ENCODE measurements at regions of chr1 and their contacts with region 1.

Region 1: GRCh38 chr1:58515794-58516401 is 30.6 kb downstream of the OMA1 start:
- H3K4me3 ChIP-seq: no peak overlapping the region
- H3K27ac ChIP-seq: no peak overlapping the region
- H3K4me1 ChIP-seq: no peaks in the 10 kb centered on the region
- CTCF ChIP-seq: peak; percentile 44; the same call in 1 of the 2 replicates

Region 2: DNA sequence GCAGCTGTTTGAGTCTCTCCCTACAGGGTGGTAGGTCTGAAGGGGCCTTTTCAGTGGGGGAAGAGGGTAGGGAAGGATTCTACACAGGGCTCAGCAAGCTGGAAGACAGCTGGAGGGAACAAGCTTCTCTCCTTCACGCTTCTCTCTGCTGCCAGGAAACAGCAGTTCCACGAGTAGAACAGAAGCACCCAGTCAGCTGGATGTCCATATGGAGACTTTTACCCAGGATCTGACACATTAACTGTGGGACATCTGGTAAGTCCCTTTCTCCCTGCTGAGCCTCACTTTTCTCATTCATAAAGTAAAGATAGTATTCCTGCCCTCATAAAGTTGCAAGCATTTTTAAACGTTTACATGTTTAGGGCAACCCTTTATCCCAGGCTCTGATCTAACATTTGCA is 249.7 kb before region 1 on chr1:
- CTCF ChIA-PET with region 1: no interaction called
- POLR2A ChIA-PET with region 1: no interaction called
- H3K4me3 ChIP-seq: no peak overlapping the region
- H3K27ac ChIP-seq: no peak overlapping the region
- H3K4me1 ChIP-seq: no peaks in the 10 kb centered on the region
- CTCF ChIP-seq: no peak

Region 3: DNA sequence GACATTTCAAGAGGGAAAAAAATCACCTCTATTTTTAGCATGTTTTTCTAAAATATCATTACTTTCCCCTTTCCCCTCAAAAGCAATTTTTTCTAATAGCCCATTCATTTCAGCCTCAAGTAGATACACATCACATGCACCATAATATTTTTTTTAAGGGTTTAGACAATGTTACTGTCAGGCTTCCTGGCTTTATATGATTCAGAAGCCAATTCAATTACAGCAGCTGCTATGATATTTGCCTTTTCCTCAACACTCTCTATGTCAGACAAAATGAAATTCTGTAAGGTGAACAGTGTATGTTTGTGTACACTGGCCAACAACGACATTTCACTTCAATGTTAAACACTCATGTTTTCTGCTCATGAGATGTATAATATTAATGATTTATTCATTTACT is 15.9 kb before region 1 on chr1:
- CTCF ChIA-PET with region 1: interaction called, 13 read pairs
- POLR2A ChIA-PET with region 1: no interaction called
- H3K4me3 ChIP-seq: no peak overlapping the region
- H3K27ac ChIP-seq: no peak overlapping the region
- H3K4me1 ChIP-seq: no peaks in the 10 kb centered on the region
- CTCF ChIP-seq: no peak

Region 4: DNA sequence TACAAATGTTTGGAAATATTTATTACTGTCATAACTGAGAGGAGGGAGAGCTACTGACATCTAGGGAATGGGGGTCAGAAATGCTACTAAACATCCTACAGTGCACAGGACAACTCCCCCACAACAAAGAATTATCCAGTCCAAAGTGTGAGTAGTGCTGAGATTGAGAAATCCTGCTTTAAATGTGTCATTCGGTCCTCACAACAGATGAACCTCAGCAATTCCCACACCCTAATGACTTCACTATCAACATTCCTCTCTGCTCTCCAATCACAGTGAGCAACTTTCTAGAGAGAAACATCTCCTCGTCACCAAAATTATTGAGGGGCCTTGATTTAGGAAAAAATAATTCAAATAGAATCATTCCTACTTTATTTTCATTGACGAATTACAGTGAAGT is 12.6 kb after region 1 on chr1:
- CTCF ChIA-PET with region 1: interaction called, 30 read pairs
- POLR2A ChIA-PET with region 1: no interaction called
- H3K4me3 ChIP-seq: no peak overlapping the region
- H3K27ac ChIP-seq: no peak overlapping the region
- H3K4me1 ChIP-seq: no peaks in the 10 kb centered on the region
- CTCF ChIP-seq: no peak

Region 5: DNA sequence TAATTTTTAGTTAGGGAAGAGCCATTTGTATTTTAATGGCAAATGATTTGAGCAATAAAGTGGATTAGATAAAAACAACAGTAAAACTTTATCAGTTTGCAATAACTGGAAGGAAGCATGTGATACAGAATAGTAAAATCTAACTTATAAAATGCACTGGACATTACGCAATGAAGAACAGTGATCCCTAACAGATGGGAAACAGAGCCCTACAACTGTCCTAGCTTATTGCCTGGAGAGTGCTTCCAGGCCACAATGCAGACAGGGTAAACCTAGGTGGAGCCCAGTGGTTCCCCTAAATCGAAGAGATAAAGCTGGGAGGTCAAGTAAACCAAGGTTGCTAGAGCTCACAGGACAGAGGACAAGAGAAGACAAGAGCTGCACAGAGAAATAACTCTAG is 23.7 kb after region 1 on chr1:
- CTCF ChIA-PET with region 1: interaction called, 34 read pairs
- POLR2A ChIA-PET with region 1: no interaction called
- H3K4me3 ChIP-seq: no peak overlapping the region
- H3K27ac ChIP-seq: no peak overlapping the region
- H3K4me1 ChIP-seq: 0 out of 2 replicates have a peak, but pooled peaks cover 3% of the 10 kb centered on the region
- CTCF ChIP-seq: no peak

Region 6: GRCh38 chr1:58546520-58547308 is 30.8 kb after region 1 on chr1 and contains the start of gene OMA1:
- CTCF ChIA-PET with region 1: interaction called, 34 read pairs
- POLR2A ChIA-PET with region 1: interaction called, 3 read pairs
- H3K4me3 ChIP-seq: peak within 1 kb of the TSS; percentile 79
- H3K27ac ChIP-seq: peak within 1 kb of the TSS; percentile 58
- H3K4me1 ChIP-seq: no peaks in the 10 kb centered on the region
- CTCF ChIP-seq: peak; percentile 98

Region 7: DNA sequence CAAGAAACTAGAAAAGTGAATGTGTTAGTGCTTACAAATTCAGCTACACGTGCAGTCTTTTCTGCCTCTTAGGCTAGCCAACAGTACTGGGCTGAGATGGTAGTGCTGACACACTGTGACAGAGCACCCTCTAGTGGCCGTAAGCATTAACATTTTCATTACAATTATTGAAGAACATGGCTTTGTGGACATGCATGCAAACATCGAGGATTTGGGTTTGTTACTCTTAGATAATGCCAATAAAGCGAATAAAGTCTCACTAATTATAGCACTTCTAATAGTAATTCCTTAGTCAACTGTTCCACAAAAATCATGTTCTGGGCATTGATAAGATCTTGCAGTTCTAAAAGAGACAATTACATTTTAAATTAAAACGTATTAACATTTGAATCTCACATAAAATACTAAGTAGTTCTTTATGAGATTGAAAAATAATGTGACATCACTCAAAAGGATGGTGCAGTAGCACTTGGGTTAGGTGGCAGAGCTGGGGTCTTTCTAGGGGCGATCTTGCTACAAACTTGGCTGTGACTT is 136.8 kb after region 1 on chr1:
- CTCF ChIA-PET with region 1: interaction called, 98 read pairs
- POLR2A ChIA-PET with region 1: no interaction called
- H3K4me3 ChIP-seq: no peak overlapping the region
- H3K27ac ChIP-seq: no peak overlapping the region
- H3K4me1 ChIP-seq: no peaks in the 10 kb centered on the region
- CTCF ChIP-seq: peak; percentile 63

Measured in HEK293 (cell line).